Spleen (tissue), 13 donors: ENCODE measurements at regions of chr7 and their contacts with region 1.

Region 1: GRCh38 chr7:11831736-11832495 is at the start of gene THSD7A:
- DNase-seq: peak; percentile 84
- H3K4me3 ChIP-seq: peak within 1 kb of the TSS; percentile 27 to 70 (median 37)
- H3K27ac ChIP-seq: peak within 1 kb of the TSS; percentile 16 to 87 (median 70)
- H3K4me1 ChIP-seq: peaks cover 0 to 23% (median 7%) of the 10 kb centered on the region in 6 donors
- H3K27me3 ChIP-seq: peaks cover 0 to 33% (median 17%) of the 10 kb centered on the region in 7 donors
- CTCF ChIP-seq: peak in 2 of 11 experiments; percentile 16 to 20
- POLR2A ChIP-seq: no peak
- total RNA-seq, gene THSD7A: 3.6 to 8.7 (median 5.1) TPM

Region 2: DNA sequence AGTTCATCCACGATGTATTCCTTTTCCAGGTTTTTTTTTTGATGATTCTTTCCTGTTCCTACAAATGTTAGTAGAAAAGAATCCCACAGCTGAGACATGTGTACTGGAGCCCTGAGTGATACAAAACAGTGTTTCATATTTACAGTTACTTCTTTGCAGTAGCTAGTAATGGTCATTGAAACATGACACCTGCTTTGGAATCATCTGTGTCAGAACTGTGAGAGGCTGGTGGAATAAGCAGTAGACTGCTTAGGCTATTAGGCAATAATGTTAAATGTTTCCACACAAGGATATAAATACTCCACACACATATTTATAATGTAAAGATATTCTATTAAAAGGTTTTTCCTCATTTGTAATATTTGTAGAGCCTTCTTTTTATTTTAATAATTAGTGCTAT is 393.9 kb before region 1 on chr7:
- intact Hi-C with region 1: loop called (anchors 10 kb)
- DNase-seq: no peak
- H3K4me3 ChIP-seq: no peak overlapping the region
- H3K27ac ChIP-seq: no peak overlapping the region
- H3K4me1 ChIP-seq: no peaks in the 10 kb centered on the region
- H3K27me3 ChIP-seq: no peaks in the 10 kb centered on the region
- CTCF ChIP-seq: no peak
- POLR2A ChIP-seq: no peak

Region 3: GRCh38 chr7:11911900-11912299 is 80.0 kb after region 1 on chr7:
- intact Hi-C with region 1: no loop called
- DNase-seq: no peak
- H3K4me3 ChIP-seq: no peak overlapping the region
- H3K27ac ChIP-seq: no peak overlapping the region
- H3K4me1 ChIP-seq: no peaks in the 10 kb centered on the region
- H3K27me3 ChIP-seq: no peaks in the 10 kb centered on the region
- CTCF ChIP-seq: no peak
- POLR2A ChIP-seq: no peak

Region 4: GRCh38 chr7:12314199-12314598 is 482.3 kb after region 1 on chr7:
- intact Hi-C with region 1: loop called (anchors 10 kb)
- DNase-seq: no peak
- H3K4me3 ChIP-seq: no peak overlapping the region
- H3K27ac ChIP-seq: no peak overlapping the region
- H3K4me1 ChIP-seq: no peaks in the 10 kb centered on the region
- H3K27me3 ChIP-seq: no peaks in the 10 kb centered on the region
- CTCF ChIP-seq: no peak
- POLR2A ChIP-seq: no peak